Heart right ventricle (tissue), 16 donors: ENCODE measurements at regions of chr11 and their contacts with region 1.

Region 1: DNA sequence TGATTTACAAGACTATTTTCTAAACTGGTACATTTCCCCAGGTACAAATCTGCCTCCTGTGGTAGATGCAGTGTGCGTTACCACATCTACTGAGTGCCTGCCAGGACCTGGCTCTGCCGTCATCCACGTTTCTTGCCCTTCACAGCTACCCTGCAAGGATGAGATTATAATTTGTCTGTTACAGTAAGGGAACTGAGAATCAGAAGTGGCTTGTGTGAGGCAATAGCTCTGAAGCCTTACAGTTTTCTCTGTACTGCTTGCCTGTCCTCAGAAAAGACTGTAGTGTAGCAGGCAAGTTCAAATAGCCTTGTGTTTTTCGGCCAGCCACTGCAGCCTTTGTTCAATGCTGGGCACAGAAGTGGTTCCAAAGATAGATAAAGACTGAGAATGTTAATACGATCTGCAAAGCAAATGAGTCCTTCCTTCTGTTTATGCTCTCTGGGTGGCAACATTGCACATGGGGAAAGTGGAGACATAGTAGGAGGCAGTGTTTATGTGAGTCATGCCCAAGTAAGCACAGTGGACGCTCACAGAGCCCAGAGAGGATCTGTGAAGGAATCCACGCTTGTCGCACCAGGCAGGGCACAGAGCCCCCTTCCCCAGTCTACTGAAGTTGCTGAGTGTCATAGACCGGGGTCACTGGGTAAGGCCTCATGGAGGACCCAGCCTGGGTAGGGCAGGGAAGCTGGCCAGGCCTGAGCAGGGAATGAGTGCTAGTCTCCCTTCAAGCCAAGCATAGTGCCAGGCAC is 49.1 kb downstream of the MICAL2 start:
- DNase-seq: no peak
- ATAC-seq: peak in 7 of 8 donors; percentile 23 to 68 (median 48)
- H3K4me3 ChIP-seq: no peak overlapping the region
- H3K27ac ChIP-seq: peak overlapping the region; percentile 70 to 95 (median 88)
- H3K4me1 ChIP-seq: peaks cover 28 to 91% (median 83%) of the 10 kb centered on the region in 9 donors
- H3K27me3 ChIP-seq: no peaks in the 10 kb centered on the region
- CTCF ChIP-seq: peak in 2 of 9 donors; percentile 11 to 17

Region 2: GRCh38 chr11:12100841-12101242 is 58.7 kb before region 1 on chr11:
- intact Hi-C with region 1: loop called in 1 of 10 experiments (anchors 5 kb)
- DNase-seq: no peak
- ATAC-seq: peak in 7 of 8 donors; percentile 20 to 79 (median 55)
- H3K4me3 ChIP-seq: no peak overlapping the region
- H3K27ac ChIP-seq: no peak overlapping the region
- H3K4me1 ChIP-seq: peaks cover 0 to 56% (median 34%) of the 10 kb centered on the region in 9 donors
- H3K27me3 ChIP-seq: no peaks in the 10 kb centered on the region
- CTCF ChIP-seq: no peak

Region 3: GRCh38 chr11:12110201-12110713 is 49.3 kb before region 1 on chr11 and contains the start of gene MICAL2:
- intact Hi-C with region 1: loop called in 1 of 10 experiments (anchors 5 kb)
- DNase-seq: peak; percentile 90 to 92
- ATAC-seq: peak; percentile 95 to 98 (median 97)
- H3K4me3 ChIP-seq: peak within 1 kb of the TSS; percentile 72 to 97 (median 89)
- H3K27ac ChIP-seq: peak within 1 kb of the TSS; percentile 42 to 89 (median 87)
- H3K4me1 ChIP-seq: peaks cover 9 to 66% (median 41%) of the 10 kb centered on the region in 9 donors
- H3K27me3 ChIP-seq: no peaks in the 10 kb centered on the region
- CTCF ChIP-seq: no peak
- total RNA-seq, gene MICAL2: 38.1 to 95.7 (median 72.7) TPM

Region 4: GRCh38 chr11:12122083-12122482 is 37.4 kb before region 1 on chr11:
- intact Hi-C with region 1: no loop called
- DNase-seq: no peak
- ATAC-seq: no peak
- H3K4me3 ChIP-seq: no peak overlapping the region
- H3K27ac ChIP-seq: no peak overlapping the region
- H3K4me1 ChIP-seq: peaks cover 27 to 96% (median 81%) of the 10 kb centered on the region in 9 donors
- H3K27me3 ChIP-seq: no peaks in the 10 kb centered on the region
- CTCF ChIP-seq: peak in 8 of 9 donors; percentile 15 to 50 (median 35)

Region 5: GRCh38 chr11:12137938-12138731 is 21.4 kb before region 1 on chr11:
- intact Hi-C with region 1: no loop called
- DNase-seq: no peak
- ATAC-seq: peak in 4 of 8 donors; percentile 17 to 30 (median 22)
- H3K4me3 ChIP-seq: no peak overlapping the region
- H3K27ac ChIP-seq: peak overlapping the region in 6 of 10 donors; percentile 8 to 71 (median 41)
- H3K4me1 ChIP-seq: peaks cover 2 to 100% (median 64%) of the 10 kb centered on the region in 9 donors
- H3K27me3 ChIP-seq: no peaks in the 10 kb centered on the region
- CTCF ChIP-seq: no peak

Region 6: GRCh38 chr11:12174477-12175143 is 15.1 kb after region 1 on chr11:
- intact Hi-C with region 1: no loop called
- DNase-seq: no peak
- ATAC-seq: no peak
- H3K4me3 ChIP-seq: no peak overlapping the region
- H3K27ac ChIP-seq: peak overlapping the region in 1 of 10 donors; percentile 46
- H3K4me1 ChIP-seq: peaks cover 4 to 64% (median 44%) of the 10 kb centered on the region in 9 donors
- H3K27me3 ChIP-seq: no peaks in the 10 kb centered on the region
- CTCF ChIP-seq: no peak

Region 7: GRCh38 chr11:12200279-12201010 is 40.9 kb after region 1 on chr11:
- intact Hi-C with region 1: loop called in 1 of 10 experiments (anchors 5 kb)
- DNase-seq: peak in 1 of 2 donors; percentile 68
- ATAC-seq: peak in 7 of 8 donors; percentile 4 to 67 (median 37)
- H3K4me3 ChIP-seq: no peak overlapping the region
- H3K27ac ChIP-seq: peak overlapping the region; percentile 50 to 91 (median 85)
- H3K4me1 ChIP-seq: peaks cover 22 to 68% (median 49%) of the 10 kb centered on the region in 9 donors
- H3K27me3 ChIP-seq: no peaks in the 10 kb centered on the region
- CTCF ChIP-seq: no peak

Region 8: GRCh38 chr11:12213920-12214319 is 54.4 kb after region 1 on chr11:
- intact Hi-C with region 1: no loop called
- DNase-seq: no peak
- ATAC-seq: no peak
- H3K4me3 ChIP-seq: no peak overlapping the region
- H3K27ac ChIP-seq: no peak overlapping the region
- H3K4me1 ChIP-seq: peaks cover 4 to 30% (median 20%) of the 10 kb centered on the region in 9 donors
- H3K27me3 ChIP-seq: no peaks in the 10 kb centered on the region
- CTCF ChIP-seq: no peak

Region 9: DNA sequence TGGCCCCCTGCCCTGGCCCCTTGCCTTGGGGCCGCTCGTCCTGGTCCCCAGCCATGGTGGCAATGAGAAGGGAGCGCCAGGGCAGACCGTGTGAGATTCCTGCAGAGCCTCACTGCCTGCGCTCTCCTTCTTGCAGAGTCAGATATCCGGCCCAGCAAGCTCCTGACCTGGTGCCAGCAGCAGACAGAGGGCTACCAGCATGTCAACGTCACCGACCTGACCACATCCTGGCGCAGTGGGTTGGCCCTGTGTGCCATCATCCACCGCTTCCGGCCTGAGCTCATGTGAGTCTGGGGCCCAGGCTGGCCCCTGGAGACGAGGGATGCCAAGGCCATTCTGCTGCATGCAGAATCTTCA is 65.0 kb after region 1 on chr11:
- intact Hi-C with region 1: loop called in 4 of 10 experiments (anchors 5 to 10 kb)
- DNase-seq: peak; percentile 76
- ATAC-seq: peak; percentile 20 to 59 (median 34)
- H3K4me3 ChIP-seq: peak overlapping the region in 1 of 10 donors; percentile 19
- H3K27ac ChIP-seq: peak overlapping the region in 8 of 10 donors; percentile 30 to 86 (median 52)
- H3K4me1 ChIP-seq: peaks cover 21 to 55% (median 48%) of the 10 kb centered on the region in 9 donors
- H3K27me3 ChIP-seq: no peaks in the 10 kb centered on the region
- CTCF ChIP-seq: no peak